ENCODE measurements at regions of chr5 and their contacts with region 1.

Region 1: DNA sequence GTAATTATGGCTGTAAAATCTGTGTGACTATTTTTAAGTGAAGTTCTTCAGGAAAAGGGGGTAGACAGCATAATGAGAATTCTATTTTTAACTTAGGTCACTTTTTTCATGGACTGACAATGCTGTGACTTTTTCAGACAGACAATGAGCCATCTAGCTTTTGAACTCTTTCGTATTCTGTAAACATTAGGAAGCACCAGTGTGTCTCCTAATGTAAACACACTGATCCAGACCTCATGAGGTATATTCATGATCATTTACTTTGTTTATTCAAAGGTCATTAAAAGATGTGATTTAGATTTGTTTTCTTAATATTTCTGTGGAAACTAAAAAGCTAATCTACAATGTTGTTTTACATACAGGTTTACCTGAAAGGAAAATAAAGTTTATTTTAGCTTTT is 352.6 kb downstream of the ADGRV1 start:
- DNase-seq: no peak
- ATAC-seq: peak; percentile 77
- H3K4me3 ChIP-seq: no peak overlapping the region
- H3K27ac ChIP-seq: no peak overlapping the region
- H3K4me1 ChIP-seq: peaks cover 18% of the 10 kb centered on the region
- H3K27me3 ChIP-seq: no peaks in the 10 kb centered on the region
- CTCF ChIP-seq: no peak

Region 2: DNA sequence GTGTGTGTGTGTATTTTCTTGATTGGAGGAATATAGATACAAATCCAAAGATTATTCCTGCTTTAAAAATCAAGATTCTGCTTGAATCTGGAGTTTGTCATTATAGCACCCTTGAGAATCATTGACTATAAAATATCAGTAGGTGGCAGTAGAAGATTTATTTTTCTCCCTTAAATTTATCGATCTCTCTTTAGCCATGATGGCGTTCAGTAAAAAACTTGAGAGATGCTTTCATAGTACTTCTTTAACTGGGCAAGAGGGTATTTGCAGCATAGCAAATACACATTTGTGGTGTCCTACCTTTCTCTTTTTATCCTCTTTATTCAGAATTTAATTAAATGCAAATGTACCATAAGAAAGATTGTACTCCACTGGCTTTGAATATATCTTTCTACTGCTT is 44.8 kb before region 1 on chr5:
- CTCF ChIA-PET with region 1: no interaction called
- POLR2A ChIA-PET with region 1: no interaction called
- intact Hi-C with region 1: loop called (anchors 5 kb)
- DNase-seq: peak; percentile 65
- ATAC-seq: peak; percentile 71
- H3K4me3 ChIP-seq: no peak overlapping the region
- H3K27ac ChIP-seq: no peak overlapping the region
- H3K4me1 ChIP-seq: 0 out of 2 replicates have a peak, but pooled peaks cover 4% of the 10 kb centered on the region
- H3K27me3 ChIP-seq: no peaks in the 10 kb centered on the region
- CTCF ChIP-seq: peak; percentile 77

Region 3: DNA sequence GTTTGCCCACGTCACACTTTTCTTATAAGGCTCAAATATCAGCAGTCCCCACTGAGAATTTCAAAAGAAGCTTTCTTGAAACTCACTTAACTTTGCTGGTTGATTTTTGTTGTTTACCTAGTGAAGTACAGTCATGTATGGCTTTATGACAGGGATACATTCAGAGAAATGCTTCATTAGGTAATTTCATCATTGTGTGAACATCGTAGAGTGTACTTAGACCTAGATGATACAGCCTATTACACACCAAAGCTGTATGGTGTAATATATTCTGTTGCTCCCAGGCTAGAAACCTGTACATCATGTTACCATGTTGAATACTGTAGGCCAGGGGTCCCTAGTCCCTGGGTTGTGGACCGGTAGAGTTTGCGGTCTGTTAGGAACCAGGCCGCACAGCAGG is 294.9 kb after region 1 on chr5:
- CTCF ChIA-PET with region 1: no interaction called
- POLR2A ChIA-PET with region 1: no interaction called
- intact Hi-C with region 1: no loop called
- DNase-seq: peak; percentile 48
- ATAC-seq: peak; percentile 57
- H3K4me3 ChIP-seq: no peak overlapping the region
- H3K27ac ChIP-seq: peak overlapping the region; percentile 20; the same call in 1 of the 2 replicates
- H3K4me1 ChIP-seq: peaks cover 5% of the 10 kb centered on the region; the same call in 1 of the 2 replicates
- H3K27me3 ChIP-seq: no peaks in the 10 kb centered on the region
- CTCF ChIP-seq: no peak